ENCODE measurements at regions of chr5 and their contacts with region 1.

Region 1: DNA sequence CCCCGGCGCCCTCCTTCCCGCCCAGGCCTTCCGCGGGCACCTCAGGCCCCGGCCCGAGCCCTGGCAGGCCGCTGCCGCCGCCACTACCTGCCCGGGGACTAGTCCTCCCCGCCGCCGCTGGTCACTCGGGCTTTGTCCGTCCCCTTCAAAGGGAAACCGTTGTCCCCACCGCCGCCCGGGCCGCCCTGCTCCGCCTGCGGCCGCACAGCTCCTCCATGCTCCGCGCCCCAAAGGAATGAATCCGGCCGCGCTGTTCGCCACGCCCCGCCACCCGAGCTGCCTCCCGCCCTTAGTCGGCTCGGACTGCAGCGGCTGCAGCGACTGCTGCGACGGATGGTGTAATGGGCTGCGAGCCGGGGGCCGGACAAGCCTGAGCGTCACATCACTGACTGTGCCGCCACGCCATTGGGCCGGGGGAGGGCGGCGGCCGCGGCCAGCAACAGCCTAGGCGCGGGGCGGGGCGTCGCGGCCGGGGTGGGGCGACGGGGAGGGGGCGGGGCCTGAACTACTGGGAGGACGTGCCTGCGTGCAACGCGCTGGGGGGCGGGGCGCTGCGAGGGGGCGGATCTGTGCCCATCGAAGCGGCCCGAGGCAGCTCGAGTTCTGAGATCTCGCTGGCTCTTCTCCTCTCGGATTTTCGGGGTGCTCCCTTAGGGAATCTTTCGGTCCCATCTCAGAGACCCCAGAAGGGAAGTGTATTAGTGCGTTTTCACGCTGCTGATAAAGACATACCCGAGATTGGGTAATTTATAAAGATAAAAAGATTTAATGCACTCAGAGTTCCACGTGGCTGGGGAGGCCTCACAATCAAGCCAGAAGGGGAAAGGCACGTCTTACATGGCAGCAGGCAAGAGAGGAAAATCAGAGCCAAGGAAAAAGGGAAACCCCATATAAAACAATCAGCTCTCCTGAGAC is at the start of gene FEM1C:
- DNase-seq: peak; percentile 98 to 99 (median 99)
- ATAC-seq: peak; percentile 99
- H3K4me3 ChIP-seq: peak within 1 kb of the TSS; percentile 72
- H3K27ac ChIP-seq: peak within 1 kb of the TSS; percentile 95
- H3K4me1 ChIP-seq: no peaks in the 10 kb centered on the region
- H3K27me3 ChIP-seq: no peaks in the 10 kb centered on the region
- total RNA-seq, gene FEM1C: 19.3 to 29.5 (median 22.1) TPM

Region 2: DNA sequence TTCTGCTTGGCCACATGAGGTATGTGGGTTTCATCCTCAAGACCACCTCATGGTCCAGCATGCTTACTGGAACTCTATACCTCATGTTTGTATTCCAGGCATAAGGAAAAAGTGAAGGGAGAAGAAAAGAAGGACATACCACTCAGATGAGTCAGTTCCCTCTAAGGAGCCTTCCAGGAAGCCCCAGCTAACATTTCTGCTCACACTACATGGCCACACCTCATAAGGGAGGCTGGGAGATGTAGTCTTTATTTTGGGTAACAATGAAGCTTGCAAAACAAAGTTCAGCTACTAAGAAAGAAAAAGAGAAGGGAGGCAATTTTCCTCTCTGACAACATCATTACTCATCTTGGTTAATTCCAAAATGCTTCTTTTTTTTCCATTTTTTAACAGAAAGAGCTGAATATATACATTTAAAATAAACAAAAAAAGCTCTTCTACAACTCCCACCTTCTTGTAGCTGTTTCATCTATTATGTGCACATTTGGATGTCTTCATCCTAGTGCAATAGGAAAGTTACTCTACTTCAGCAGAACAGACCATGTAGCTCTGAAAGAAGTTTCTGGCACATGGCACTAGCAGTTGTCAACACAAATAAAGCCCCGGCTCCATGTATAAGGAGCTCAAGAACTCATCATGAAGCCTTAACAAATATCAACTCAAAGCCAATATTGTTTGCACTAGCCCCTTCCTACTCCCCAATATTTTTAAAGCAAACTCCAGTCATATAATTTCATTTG is 124.7 kb before region 1 on chr5:
- intact Hi-C with region 1: loop called in 2 of 4 experiments (anchors 5 to 10 kb)
- DNase-seq: no peak
- ATAC-seq: peak; percentile 35 to 75
- H3K4me3 ChIP-seq: no peak overlapping the region
- H3K27ac ChIP-seq: no peak overlapping the region
- H3K4me1 ChIP-seq: peaks cover 6% of the 10 kb centered on the region
- H3K27me3 ChIP-seq: no peaks in the 10 kb centered on the region

Region 3: DNA sequence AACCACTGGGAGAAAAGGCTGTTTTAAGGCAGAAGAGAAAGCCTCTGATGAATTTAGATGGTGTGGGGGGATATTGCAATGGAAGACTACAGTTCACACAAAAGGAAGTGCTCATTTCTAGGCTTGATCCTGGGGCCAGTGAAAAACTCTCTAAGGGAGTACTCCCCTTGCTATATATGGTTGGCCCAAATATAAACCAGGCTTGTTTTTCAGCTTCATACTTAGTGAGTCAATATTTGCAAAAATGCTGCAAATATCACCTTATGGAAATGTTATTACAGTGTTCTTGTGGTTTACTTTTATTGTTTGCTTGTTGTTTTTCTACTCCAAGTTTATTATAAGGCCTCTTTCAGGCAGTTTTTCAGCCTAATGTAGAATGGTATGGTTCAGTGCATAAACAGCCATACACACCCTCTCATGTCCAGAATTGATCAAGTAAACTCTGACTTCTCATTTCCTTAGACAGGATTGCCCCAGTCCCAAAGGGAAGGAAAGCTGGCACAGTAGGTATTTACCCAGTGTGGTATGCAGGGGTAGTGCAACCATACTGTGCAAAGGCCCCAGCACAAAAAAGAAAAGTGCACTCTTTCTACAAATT is 115.3 kb before region 1 on chr5:
- intact Hi-C with region 1: loop called in 2 of 4 experiments (anchors 5 to 10 kb)
- DNase-seq: no peak
- ATAC-seq: no peak
- H3K4me3 ChIP-seq: no peak overlapping the region
- H3K27ac ChIP-seq: no peak overlapping the region
- H3K4me1 ChIP-seq: peaks cover 4% of the 10 kb centered on the region
- H3K27me3 ChIP-seq: no peaks in the 10 kb centered on the region

Region 4: DNA sequence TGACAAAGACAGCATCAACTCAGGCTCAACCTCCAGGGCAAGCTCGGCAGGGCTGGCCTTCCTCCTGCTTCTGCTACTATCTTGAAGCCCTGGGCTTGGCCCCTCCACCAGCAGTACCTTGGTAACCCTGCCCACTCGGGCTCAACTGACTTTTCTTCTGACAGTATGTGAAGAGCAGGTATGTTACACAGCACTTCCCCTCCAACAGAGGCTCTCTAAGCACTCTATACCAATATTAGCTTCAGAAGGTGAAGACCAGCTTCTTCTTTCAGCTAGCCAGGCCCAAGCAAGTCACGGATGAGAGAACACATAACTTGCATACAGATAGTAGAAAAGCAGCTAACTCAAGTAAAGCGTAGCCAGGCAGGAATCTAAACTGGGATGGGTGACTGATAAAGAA is 64.4 kb before region 1 on chr5:
- intact Hi-C with region 1: no loop called
- DNase-seq: no peak
- ATAC-seq: no peak
- H3K4me3 ChIP-seq: no peak overlapping the region
- H3K27ac ChIP-seq: no peak overlapping the region
- H3K4me1 ChIP-seq: no peaks in the 10 kb centered on the region
- H3K27me3 ChIP-seq: no peaks in the 10 kb centered on the region

Measured in right cardiac atrium (tissue), 5 donors.